Heart right ventricle (tissue), 16 donors: ENCODE measurements at regions of chr11 and their contacts with region 1.

Region 1: GRCh38 chr11:123357961-123358841 is 71.9 kb upstream of the GRAMD1B start:
- DNase-seq: peak in 1 of 2 donors; percentile 40
- ATAC-seq: peak; percentile 46 to 68 (median 64)
- H3K4me3 ChIP-seq: peak overlapping the region; percentile 32 to 61 (median 57)
- H3K27ac ChIP-seq: peak overlapping the region; percentile 6 to 81 (median 70)
- H3K4me1 ChIP-seq: peaks cover 0 to 29% (median 15%) of the 10 kb centered on the region in 9 donors
- H3K27me3 ChIP-seq: peaks cover 0 to 56% (median 31%) of the 10 kb centered on the region in 7 donors
- CTCF ChIP-seq: peak in 7 of 9 donors; percentile 21 to 57 (median 34)

Region 2: GRCh38 chr11:123246749-123247495 is 111.3 kb before region 1 on chr11:
- intact Hi-C with region 1: no loop called
- DNase-seq: peak; percentile 78 to 79
- ATAC-seq: peak; percentile 68 to 86 (median 80)
- H3K4me3 ChIP-seq: peak overlapping the region in 1 of 10 donors; percentile 5
- H3K27ac ChIP-seq: no peak overlapping the region
- H3K4me1 ChIP-seq: peaks cover 0 to 13% (median 4%) of the 10 kb centered on the region in 9 donors
- H3K27me3 ChIP-seq: peaks cover 0 to 14% (median 6%) of the 10 kb centered on the region in 7 donors
- CTCF ChIP-seq: peak; percentile 96 to 99 (median 98)

Region 3: DNA sequence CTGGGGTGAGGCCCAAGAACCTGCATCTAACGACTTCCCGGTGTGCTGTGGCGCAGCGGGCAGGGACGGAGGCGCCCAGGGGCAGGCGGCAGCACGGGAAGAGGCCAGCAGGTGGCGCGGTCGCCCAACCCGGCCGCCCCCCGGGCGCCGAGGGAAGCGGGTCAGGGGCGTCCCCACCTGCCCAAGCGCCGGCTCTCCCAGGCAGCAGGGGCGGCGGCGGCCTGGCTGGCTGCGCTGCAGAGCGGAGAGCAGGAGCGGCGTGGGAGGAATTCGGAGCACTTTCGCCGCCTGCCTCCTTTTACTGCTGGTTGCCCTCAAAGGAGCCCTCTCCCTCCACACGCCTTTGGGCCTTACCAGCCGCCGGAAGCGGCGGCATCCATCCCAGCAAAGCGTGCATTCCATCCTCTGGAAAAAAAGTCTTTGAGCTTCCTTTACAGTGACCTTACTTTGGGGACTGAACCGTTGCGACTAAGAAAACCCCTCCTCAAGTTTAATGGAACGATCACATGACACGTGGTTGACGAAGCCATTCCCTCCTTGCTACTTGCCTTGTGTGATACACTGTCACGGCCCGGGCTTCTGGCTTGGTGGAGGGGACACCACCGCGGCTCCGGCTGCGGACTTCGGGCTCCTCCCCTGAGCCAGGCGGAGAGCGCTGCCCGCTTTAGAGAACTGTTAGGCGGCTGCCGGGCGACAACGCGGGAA is 56.4 kb before region 1 on chr11:
- intact Hi-C with region 1: loop called in 8 of 10 experiments (anchors 1 to 10 kb)
- DNase-seq: peak; percentile 39 to 70
- ATAC-seq: peak; percentile 84 to 91 (median 89)
- H3K4me3 ChIP-seq: peak overlapping the region in 9 of 10 donors; percentile 26 to 59 (median 48)
- H3K27ac ChIP-seq: peak overlapping the region in 4 of 10 donors; percentile 18 to 53 (median 28)
- H3K4me1 ChIP-seq: peaks cover 0 to 33% (median 13%) of the 10 kb centered on the region in 9 donors
- H3K27me3 ChIP-seq: peaks cover 0 to 26% (median 14%) of the 10 kb centered on the region in 7 donors
- CTCF ChIP-seq: peak; percentile 82 to 97 (median 92)

Region 4: GRCh38 chr11:123308077-123308476 is 50.1 kb before region 1 on chr11:
- intact Hi-C with region 1: loop called in 6 of 10 experiments (anchors 2 to 10 kb)
- DNase-seq: peak in 1 of 2 donors; percentile 13
- ATAC-seq: peak; percentile 71 to 95 (median 88)
- H3K4me3 ChIP-seq: no peak overlapping the region
- H3K27ac ChIP-seq: peak overlapping the region; percentile 54 to 85 (median 72)
- H3K4me1 ChIP-seq: peaks cover 0 to 32% (median 7%) of the 10 kb centered on the region in 9 donors
- H3K27me3 ChIP-seq: peaks cover 0 to 20% (median 9%) of the 10 kb centered on the region in 7 donors
- CTCF ChIP-seq: no peak

Region 5: GRCh38 chr11:123407130-123407995 is 49.2 kb after region 1 on chr11:
- intact Hi-C with region 1: loop called in 4 of 10 experiments (anchors 1 to 5 kb)
- DNase-seq: peak in 1 of 2 donors; percentile 71
- ATAC-seq: peak; percentile 31 to 68 (median 63)
- H3K4me3 ChIP-seq: peak overlapping the region in 2 of 10 donors; percentile 7 to 39
- H3K27ac ChIP-seq: peak overlapping the region in 6 of 10 donors; percentile 27 to 76 (median 46)
- H3K4me1 ChIP-seq: peaks cover 0 to 43% (median 28%) of the 10 kb centered on the region in 9 donors
- H3K27me3 ChIP-seq: peaks cover 0 to 4% (median 0%) of the 10 kb centered on the region in 7 donors
- CTCF ChIP-seq: peak; percentile 14 to 76 (median 65)

Region 6: DNA sequence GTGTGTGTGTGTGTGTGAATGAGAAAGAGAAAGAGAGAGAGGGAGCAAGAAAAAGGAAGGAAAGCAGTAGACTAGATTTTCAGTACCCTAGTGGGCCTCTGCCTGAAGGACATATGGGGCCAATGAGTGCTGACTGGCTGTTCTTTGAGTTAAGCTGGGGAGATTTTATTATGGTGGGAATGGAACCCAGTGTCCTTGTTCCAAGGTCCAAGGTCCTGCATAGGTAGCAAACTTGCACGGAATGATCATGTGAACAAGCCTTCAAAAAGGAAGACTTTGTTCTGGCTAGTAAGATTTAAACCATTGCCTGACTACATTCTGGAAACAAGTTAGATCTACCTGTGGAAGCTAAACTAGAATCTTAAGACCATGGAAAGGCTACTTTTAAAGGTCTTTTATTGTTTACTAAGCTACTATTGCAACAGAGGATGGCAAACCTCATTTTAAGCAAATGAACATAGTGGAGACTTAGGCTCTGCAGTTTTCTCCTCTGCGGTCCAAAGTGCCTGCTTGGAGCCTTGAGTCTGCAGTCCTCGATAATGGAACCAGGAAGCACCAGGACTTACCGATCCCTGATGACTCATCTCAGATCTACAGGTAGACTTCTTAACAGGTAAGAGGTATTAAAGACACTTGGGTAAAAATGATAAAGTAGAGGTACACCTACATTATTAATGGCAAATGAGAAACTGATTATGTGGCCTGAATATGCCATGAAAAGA is 61.7 kb after region 1 on chr11:
- intact Hi-C with region 1: no loop called
- DNase-seq: no peak
- ATAC-seq: no peak
- H3K4me3 ChIP-seq: no peak overlapping the region
- H3K27ac ChIP-seq: no peak overlapping the region
- H3K4me1 ChIP-seq: peaks cover 0 to 10% (median 0%) of the 10 kb centered on the region in 9 donors
- H3K27me3 ChIP-seq: peaks cover 0 to 14% (median 0%) of the 10 kb centered on the region in 7 donors
- CTCF ChIP-seq: no peak